ENCODE measurements at regions of chr6 and their contacts with region 1.

Region 1: GRCh38 chr6:26241033-26241895 is 123.7 kb upstream of the BTN3A2 start:
- DNase-seq: peak; percentile 53
- H3K4me3 ChIP-seq: peak overlapping the region; percentile 50
- H3K27ac ChIP-seq: peak overlapping the region; percentile 88
- H3K4me1 ChIP-seq: no peaks in the 10 kb centered on the region
- H3K27me3 ChIP-seq: no peaks in the 10 kb centered on the region
- CTCF ChIP-seq: no peak

Region 2: GRCh38 chr6:26130254-26131249 is 110.7 kb before region 1 on chr6:
- CTCF ChIA-PET with region 1: no interaction called
- POLR2A ChIA-PET with region 1: interaction called, 19 read pairs
- intact Hi-C with region 1: no loop called
- DNase-seq: no peak
- H3K4me3 ChIP-seq: no peak overlapping the region
- H3K27ac ChIP-seq: peak overlapping the region; percentile 91
- H3K4me1 ChIP-seq: peaks cover 45% of the 10 kb centered on the region
- H3K27me3 ChIP-seq: no peaks in the 10 kb centered on the region
- CTCF ChIP-seq: no peak

Measured in A673 (cell line).